ENCODE measurements at regions of chr1 and their contacts with region 1.

Region 1: GRCh38 chr1:203340112-203340804 is 10.7 kb downstream of the FMOD start:
- DNase-seq: peak in 7 of 9 donors; percentile 39 to 68 (median 62)
- ATAC-seq: peak; percentile 80
- H3K4me3 ChIP-seq: no peak overlapping the region
- H3K4me3 Mint-ChIP-seq: no peak overlapping the region
- H3K27ac ChIP-seq: no peak overlapping the region
- H3K27ac Mint-ChIP-seq: peak overlapping the region in 7 of 9 donors; percentile 1 to 75 (median 34)
- H3K4me1 ChIP-seq: peaks cover 9 to 18% of the 10 kb centered on the region in 2 donors
- H3K4me1 Mint-ChIP-seq: peaks cover 24 to 40% (median 34%) of the 10 kb centered on the region in 7 donors
- H3K27me3 ChIP-seq: no peaks in the 10 kb centered on the region
- H3K27me3 Mint-ChIP-seq: peaks cover 0 to 50% (median 6%) of the 10 kb centered on the region in 5 donors

Region 2: DNA sequence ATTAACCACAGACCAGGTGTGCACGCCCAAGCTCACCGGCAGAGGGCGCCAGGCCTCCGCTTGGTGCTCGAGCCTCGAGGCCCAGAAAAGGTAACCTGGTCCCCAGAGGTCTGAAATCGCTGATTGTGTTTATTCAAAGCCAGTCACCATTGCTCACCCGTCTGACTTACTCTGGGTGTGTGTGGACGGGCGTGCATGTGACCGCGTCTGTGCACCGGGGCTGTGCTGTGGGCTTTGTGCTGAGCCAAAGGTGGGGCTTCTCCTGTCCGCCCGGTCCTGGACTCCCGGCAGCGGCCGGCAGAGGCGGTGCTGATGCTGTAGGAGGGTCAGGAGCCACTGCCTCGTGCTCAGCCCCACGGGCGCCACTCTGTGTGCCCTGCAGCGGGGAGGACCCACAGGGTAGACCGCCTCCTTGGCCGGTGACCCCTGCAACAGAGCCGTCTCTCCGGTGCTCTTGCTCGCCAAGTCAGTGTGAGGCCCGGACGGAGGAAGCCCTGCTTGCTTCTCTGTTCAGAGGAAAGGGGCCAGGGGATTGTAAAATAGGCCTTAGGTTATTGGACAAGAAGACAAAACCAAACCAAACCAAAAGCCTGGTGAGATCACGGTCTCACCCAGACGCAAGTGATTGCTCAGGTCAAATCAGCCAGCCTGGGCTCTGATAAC is 66.9 kb before region 1 on chr1:
- CTCF ChIA-PET with region 1: interaction called, 480 read pairs
- POLR2A ChIA-PET with region 1: interaction called, 21 read pairs
- intact Hi-C with region 1: loop called (anchors 1 kb)
- DNase-seq: peak; percentile 84 to 95 (median 91)
- ATAC-seq: peak; percentile 82
- H3K4me3 ChIP-seq: peak overlapping the region; percentile 55
- H3K4me3 Mint-ChIP-seq: peak overlapping the region; percentile 76 to 83 (median 80)
- H3K27ac ChIP-seq: peak overlapping the region; percentile 75
- H3K27ac Mint-ChIP-seq: peak overlapping the region; percentile 83 to 98 (median 94)
- H3K4me1 ChIP-seq: peaks cover 11 to 64% of the 10 kb centered on the region in 2 donors
- H3K4me1 Mint-ChIP-seq: peaks cover 20 to 71% (median 65%) of the 10 kb centered on the region in 7 donors
- H3K27me3 ChIP-seq: no peaks in the 10 kb centered on the region
- H3K27me3 Mint-ChIP-seq: no peaks in the 10 kb centered on the region

Region 3: DNA sequence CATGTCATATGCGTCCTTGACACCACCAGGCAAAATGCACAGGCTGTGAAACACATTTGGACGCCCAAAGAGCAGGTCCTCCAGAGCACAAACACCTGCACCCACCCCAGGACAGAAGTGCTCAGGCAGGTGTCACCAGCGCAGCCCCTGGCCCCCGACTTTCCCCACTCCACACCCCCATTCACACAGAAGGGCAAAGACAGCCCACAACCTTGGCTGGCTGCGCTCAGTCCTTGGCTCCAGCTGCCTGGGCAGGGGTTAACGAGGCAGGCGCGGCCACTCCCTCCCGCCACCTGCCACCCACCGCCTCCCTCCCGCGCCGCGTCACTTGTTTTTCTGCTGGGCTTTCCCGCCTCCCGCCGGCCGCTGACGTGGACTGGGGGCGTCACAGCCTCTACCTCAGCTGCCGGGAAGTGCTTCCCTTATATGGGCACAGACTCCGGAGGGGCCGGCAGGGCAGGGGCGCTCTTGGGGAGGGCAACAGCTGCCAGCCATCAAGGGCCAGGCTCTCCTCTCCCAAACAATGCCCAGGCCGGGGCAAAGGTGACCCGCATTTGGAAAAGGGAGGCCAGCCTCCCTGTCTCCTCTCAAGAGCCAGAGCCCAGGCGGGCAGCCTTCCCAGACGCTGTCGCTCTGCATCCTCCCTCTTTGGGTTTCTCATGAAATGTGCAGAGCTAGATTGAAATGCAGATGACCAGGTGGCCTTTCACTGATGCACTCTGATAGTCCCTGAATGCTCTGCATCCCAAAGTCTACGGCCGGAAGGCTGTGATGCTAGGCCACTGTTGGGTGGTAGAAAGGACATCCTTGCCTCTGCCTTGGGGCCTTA is 49.8 kb before region 1 on chr1:
- CTCF ChIA-PET with region 1: interaction called, 22 read pairs
- POLR2A ChIA-PET with region 1: interaction called, 8 read pairs
- intact Hi-C with region 1: loop called in 1 of 2 experiments (anchors 1 kb)
- DNase-seq: peak; percentile 95 to 98 (median 97)
- ATAC-seq: peak; percentile 76
- H3K4me3 ChIP-seq: peak overlapping the region; percentile 57
- H3K4me3 Mint-ChIP-seq: peak overlapping the region; percentile 75 to 89 (median 86)
- H3K27ac ChIP-seq: peak overlapping the region; percentile 98
- H3K27ac Mint-ChIP-seq: peak overlapping the region; percentile 97 to 100 (median 99)
- H3K4me1 ChIP-seq: peaks cover 54 to 58% of the 10 kb centered on the region in 2 donors
- H3K4me1 Mint-ChIP-seq: peaks cover 44 to 92% (median 86%) of the 10 kb centered on the region in 7 donors
- H3K27me3 ChIP-seq: no peaks in the 10 kb centered on the region
- H3K27me3 Mint-ChIP-seq: peaks cover 0 to 3% (median 0%) of the 10 kb centered on the region in 5 donors

Region 4: GRCh38 chr1:203304919-203305808 is 35.1 kb before region 1 on chr1 and contains the start of gene BTG2:
- CTCF ChIA-PET with region 1: interaction called, 160 read pairs
- POLR2A ChIA-PET with region 1: interaction called, 199 read pairs
- intact Hi-C with region 1: loop called (anchors 1 kb)
- DNase-seq: peak; percentile 83 to 94 (median 89)
- ATAC-seq: peak; percentile 90
- H3K4me3 ChIP-seq: peak within 1 kb of the TSS; percentile 86
- H3K4me3 Mint-ChIP-seq: peak within 1 kb of the TSS; percentile 89 to 100 (median 96)
- H3K27ac ChIP-seq: peak within 1 kb of the TSS; percentile 100
- H3K27ac Mint-ChIP-seq: peak within 1 kb of the TSS; percentile 96 to 100 (median 99)
- H3K4me1 ChIP-seq: peaks cover 22 to 40% of the 10 kb centered on the region in 2 donors
- H3K4me1 Mint-ChIP-seq: peaks cover 54 to 65% (median 60%) of the 10 kb centered on the region in 7 donors
- H3K27me3 ChIP-seq: no peaks in the 10 kb centered on the region
- H3K27me3 Mint-ChIP-seq: no peaks in the 10 kb centered on the region
- total RNA-seq, gene BTG2: 141 to 654 (median 241) TPM

Region 5: DNA sequence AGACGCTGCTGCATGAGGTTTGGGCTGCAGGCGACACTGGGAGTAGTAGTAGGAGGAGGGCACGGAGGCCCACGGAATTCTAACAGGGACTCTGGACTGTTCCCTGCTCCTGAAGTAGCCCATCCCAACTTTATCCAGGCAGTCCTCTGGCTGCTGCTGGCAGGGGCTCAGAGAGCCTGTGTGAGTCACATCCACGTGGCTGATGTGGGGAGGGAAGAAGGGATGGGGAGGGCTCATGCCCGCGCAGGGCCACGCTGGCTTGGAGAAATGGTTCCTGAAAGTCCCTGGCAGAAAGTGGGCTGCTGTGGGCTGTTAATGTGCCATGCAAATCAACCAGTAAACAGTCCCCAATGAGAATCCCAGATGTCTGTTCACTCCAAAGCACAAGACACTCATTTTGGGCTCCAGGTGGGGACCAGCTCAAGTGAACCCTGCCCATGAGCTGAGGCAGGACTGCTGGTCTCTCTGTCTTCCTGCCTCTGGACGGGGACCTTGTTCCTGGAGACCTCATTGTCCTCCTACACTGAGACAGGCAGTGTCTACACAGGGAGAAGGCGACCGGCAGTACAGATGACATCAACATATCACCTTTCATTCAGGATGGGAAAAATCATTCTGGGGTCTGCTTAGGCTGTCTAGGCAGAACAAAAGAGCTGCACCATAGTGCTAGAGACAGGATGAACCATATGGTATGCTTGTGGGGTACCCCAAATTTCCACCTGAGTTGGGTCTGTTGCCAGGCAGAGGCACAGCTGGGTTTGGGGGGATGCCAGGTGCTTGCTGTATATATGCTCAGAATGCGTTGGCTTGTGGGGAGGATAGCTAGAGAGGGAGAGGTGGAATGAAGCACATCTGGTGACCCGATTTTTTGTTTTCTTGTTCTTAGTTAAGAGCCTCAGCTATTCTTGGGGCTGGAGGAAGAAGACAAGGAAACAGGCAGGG is 68.5 kb after region 1 on chr1:
- CTCF ChIA-PET with region 1: no interaction called
- POLR2A ChIA-PET with region 1: no interaction called
- intact Hi-C with region 1: loop called in 1 of 2 experiments (anchors 10 kb)
- DNase-seq: no peak
- ATAC-seq: peak; percentile 60
- H3K4me3 ChIP-seq: no peak overlapping the region
- H3K4me3 Mint-ChIP-seq: no peak overlapping the region
- H3K27ac ChIP-seq: no peak overlapping the region
- H3K27ac Mint-ChIP-seq: no peak overlapping the region
- H3K4me1 ChIP-seq: no peaks in the 10 kb centered on the region
- H3K4me1 Mint-ChIP-seq: peaks cover 0 to 5% (median 0%) of the 10 kb centered on the region in 7 donors
- H3K27me3 ChIP-seq: peaks cover 0 to 3% of the 10 kb centered on the region in 2 donors
- H3K27me3 Mint-ChIP-seq: peaks cover 33 to 61% (median 54%) of the 10 kb centered on the region in 5 donors

Region 6: GRCh38 chr1:203486618-203487370 is 146.5 kb after region 1 on chr1:
- CTCF ChIA-PET with region 1: interaction called, 49 read pairs
- POLR2A ChIA-PET with region 1: no interaction called
- intact Hi-C with region 1: loop called (anchors 1 kb)
- DNase-seq: peak in 1 of 9 donors; percentile 5
- ATAC-seq: no peak
- H3K4me3 ChIP-seq: no peak overlapping the region
- H3K4me3 Mint-ChIP-seq: peak overlapping the region; percentile 58 to 84 (median 79)
- H3K27ac ChIP-seq: no peak overlapping the region
- H3K27ac Mint-ChIP-seq: peak overlapping the region; percentile 9 to 80 (median 72)
- H3K4me1 ChIP-seq: peaks cover 7 to 9% of the 10 kb centered on the region in 2 donors
- H3K4me1 Mint-ChIP-seq: peaks cover 0 to 20% (median 5%) of the 10 kb centered on the region in 7 donors
- H3K27me3 ChIP-seq: no peaks in the 10 kb centered on the region
- H3K27me3 Mint-ChIP-seq: peaks cover 0 to 5% (median 0%) of the 10 kb centered on the region in 5 donors

Measured in naive thymus-derived CD4-positive, alpha-beta T cell (primary cell).